ENCODE measurements at regions of chr2 and their contacts with region 1.

Region 1: DNA sequence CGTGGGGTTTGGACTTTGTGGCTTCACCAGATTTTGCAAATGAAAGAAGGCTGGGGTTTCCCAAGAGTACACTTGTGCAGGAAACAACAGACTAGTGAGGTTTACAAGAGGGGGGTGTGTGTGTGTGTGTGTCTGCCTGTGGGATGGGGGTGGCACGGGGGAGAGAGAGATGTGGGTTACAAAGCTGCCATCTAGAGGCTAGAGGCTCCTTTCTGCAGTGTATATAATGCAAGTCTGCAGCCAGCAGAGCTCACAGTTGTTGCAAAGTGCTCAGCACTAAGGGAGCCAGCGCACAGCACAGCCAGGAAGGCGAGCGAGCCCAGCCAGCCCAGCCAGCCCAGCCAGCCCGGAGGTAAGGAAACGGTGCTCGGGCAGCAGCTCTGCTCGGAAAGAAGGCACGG is at the start of gene ACKR3:
- DNase-seq: peak; percentile 94
- H3K4me3 ChIP-seq: peak within 1 kb of the TSS; percentile 58 to 63 (median 60)
- H3K27ac ChIP-seq: peak within 1 kb of the TSS; percentile 86 to 93 (median 86)
- H3K4me1 ChIP-seq: peaks cover 48 to 81% (median 74%) of the 10 kb centered on the region in 4 donors
- H3K27me3 ChIP-seq: peaks cover 0 to 12% (median 0%) of the 10 kb centered on the region in 4 donors
- CTCF ChIP-seq: peak; percentile 32 to 49 (median 47)
- EP300 ChIP-seq: no peak
- POLR2A ChIP-seq: peak; percentile 4
- total RNA-seq, gene ACKR3: 24.9 to 52.9 (median 51.0) TPM

Region 2: GRCh38 chr2:236107942-236108625 is 461.5 kb before region 1 on chr2:
- intact Hi-C with region 1: no loop called
- DNase-seq: no peak
- H3K4me3 ChIP-seq: no peak overlapping the region
- H3K27ac ChIP-seq: no peak overlapping the region
- H3K4me1 ChIP-seq: peaks cover 0 to 12% (median 4%) of the 10 kb centered on the region in 4 donors
- H3K27me3 ChIP-seq: no peaks in the 10 kb centered on the region
- CTCF ChIP-seq: no peak
- EP300 ChIP-seq: no peak
- POLR2A ChIP-seq: no peak

Region 3: DNA sequence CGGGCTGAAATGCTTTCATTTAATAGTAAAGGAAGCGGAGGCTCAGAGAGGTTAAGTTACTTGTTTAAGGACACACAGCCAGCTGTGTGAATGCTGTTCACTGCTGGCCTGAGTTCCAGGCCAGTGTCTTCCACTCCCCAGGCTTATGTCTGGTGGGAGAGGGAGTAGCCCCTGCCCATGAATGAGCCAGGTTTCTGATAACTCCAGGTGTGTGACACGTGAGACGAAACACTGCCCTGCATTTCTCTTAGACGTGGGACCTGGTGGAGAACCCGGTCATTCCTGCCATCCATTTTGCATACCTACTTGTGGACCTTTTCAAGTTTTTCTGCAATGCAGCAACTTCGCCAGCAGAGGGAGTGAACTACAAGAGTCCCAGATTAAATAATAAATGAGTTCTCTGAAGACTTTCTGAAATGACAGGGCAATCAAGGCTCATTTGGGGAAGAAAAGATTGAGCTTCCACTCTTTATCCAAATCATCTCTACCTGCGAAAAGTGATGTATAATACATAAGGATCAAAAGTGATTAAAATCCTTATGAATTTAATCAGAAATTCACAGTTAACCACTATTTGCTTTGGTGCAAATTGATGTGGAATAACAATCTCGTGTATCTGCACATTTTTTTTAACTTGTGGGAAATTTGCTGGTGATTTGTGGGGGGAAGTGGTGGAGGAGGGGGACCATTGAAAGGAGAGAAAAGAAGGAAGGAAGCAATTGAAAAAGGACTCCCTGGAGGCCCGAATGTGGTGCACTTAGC is 226.0 kb before region 1 on chr2:
- intact Hi-C with region 1: loop called (anchors 10 kb)
- DNase-seq: no peak
- H3K4me3 ChIP-seq: no peak overlapping the region
- H3K27ac ChIP-seq: no peak overlapping the region
- H3K4me1 ChIP-seq: peaks cover 0 to 7% (median 5%) of the 10 kb centered on the region in 4 donors
- H3K27me3 ChIP-seq: no peaks in the 10 kb centered on the region
- CTCF ChIP-seq: peak; percentile 70 to 86 (median 75)
- EP300 ChIP-seq: no peak
- POLR2A ChIP-seq: no peak

Region 4: DNA sequence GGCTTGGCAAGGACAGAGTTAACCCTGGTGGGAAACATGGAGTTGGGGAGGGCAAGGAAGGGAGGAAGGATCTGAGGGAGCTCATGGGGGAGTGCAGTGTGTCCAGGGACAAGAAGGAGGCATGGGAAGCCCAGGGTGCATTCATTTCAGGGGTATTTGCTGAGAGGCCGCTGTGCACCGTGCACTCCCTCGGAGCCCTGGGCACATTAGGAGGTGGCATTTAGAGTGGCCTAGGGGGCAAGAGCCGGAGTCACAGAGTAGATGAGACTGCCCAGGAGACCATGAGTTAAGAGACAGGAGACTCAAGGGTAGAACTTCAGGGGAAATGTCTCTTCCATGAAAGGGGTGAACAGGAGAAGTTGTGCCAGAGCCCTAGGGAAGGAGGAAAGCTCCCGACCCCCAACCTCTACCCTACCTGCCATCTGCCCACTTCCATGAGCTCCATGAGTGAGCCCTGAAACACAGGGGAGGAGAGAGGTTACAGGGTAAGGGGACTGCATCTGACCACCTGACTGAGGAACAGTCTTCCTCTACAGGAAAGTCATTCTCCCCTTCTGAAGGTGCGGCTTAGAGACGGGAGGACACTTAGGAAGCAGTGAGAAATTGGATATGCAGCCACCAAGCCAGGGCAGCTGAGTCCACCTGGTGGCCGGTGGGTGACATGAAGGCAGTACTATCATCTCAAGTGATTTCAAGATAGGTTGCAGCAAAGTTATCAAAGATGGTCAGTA is 457.6 kb after region 1 on chr2:
- intact Hi-C with region 1: loop called (anchors 10 kb)
- DNase-seq: no peak
- H3K4me3 ChIP-seq: no peak overlapping the region
- H3K27ac ChIP-seq: no peak overlapping the region
- H3K4me1 ChIP-seq: peaks cover 0 to 7% (median 3%) of the 10 kb centered on the region in 4 donors
- H3K27me3 ChIP-seq: no peaks in the 10 kb centered on the region
- CTCF ChIP-seq: peak; percentile 64 to 77 (median 74)
- EP300 ChIP-seq: no peak
- POLR2A ChIP-seq: no peak

Measured in esophagus muscularis mucosa (tissue), 4 donors.